ENCODE measurements at regions of chr19 and their contacts with region 1.

Region 1: GRCh38 chr19:47243776-47244547 is 12.4 kb upstream of the CCDC9 start:
- DNase-seq: peak; percentile 99
- ATAC-seq: peak; percentile 85
- H3K4me3 Mint-ChIP-seq: peak overlapping the region; percentile 87
- H3K27ac Mint-ChIP-seq: peak overlapping the region; percentile 96
- H3K4me1 Mint-ChIP-seq: peaks cover 28% of the 10 kb centered on the region
- H3K27me3 Mint-ChIP-seq: no peaks in the 10 kb centered on the region

Region 2: GRCh38 chr19:47130591-47131227 is 113.3 kb before region 1 on chr19 and contains the start of gene SAE1:
- POLR2A ChIA-PET with region 1: interaction called, 31 read pairs
- DNase-seq: peak; percentile 96
- ATAC-seq: peak; percentile 92
- H3K4me3 Mint-ChIP-seq: peak within 1 kb of the TSS; percentile 94
- H3K27ac Mint-ChIP-seq: peak within 1 kb of the TSS; percentile 93
- H3K4me1 Mint-ChIP-seq: peaks cover 38% of the 10 kb centered on the region
- H3K27me3 Mint-ChIP-seq: no peaks in the 10 kb centered on the region
- total RNA-seq, gene SAE1: 108 to 114 TPM

Region 3: DNA sequence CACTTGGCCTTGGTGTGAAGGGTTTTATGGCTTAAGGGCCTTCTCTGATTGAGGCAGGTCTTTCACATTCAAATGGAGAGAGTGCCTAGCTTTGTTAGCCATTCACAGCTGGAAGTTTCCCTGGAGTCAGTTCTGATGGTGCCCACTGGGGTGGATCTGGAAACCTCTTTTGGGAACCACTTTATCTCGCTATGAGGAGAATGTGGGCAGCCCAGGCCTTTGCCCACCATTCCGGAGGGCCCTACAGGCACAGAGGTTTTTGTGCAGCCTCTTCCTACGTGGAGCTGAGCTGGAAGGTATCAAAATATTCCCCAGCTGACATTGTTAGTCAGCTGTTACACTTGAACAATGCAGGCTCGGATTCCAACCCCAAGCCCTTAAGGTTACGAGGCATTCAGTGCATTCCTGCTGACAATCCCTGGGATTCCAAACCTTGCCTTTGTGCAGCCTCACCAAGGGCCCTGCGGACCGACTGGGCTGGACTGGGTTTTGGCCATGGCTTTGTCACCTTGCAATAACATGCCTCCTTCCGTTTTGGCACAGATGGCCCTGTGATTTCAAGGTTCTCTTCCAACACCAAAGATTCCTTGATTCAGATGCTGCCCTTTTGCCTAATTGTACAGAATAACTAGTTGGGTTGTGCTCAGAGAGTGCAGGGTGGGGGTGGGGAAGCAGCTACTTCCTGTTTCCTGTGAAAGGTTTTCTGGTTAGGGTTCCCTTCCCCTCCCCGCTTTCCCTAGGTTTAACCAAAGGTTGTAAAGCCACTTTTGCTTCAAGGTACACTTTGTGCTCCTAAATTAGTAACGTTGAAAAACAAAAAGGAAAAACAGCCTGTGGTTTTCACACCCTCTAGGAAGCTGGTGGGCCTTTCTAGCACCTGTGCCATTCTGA is 86.3 kb before region 1 on chr19:
- POLR2A ChIA-PET with region 1: interaction called, 23 read pairs
- DNase-seq: no peak
- ATAC-seq: peak; percentile 19
- H3K4me3 Mint-ChIP-seq: peak overlapping the region; percentile 73
- H3K27ac Mint-ChIP-seq: peak overlapping the region; percentile 86
- H3K4me1 Mint-ChIP-seq: peaks cover 39% of the 10 kb centered on the region
- H3K27me3 Mint-ChIP-seq: no peaks in the 10 kb centered on the region

Region 4: DNA sequence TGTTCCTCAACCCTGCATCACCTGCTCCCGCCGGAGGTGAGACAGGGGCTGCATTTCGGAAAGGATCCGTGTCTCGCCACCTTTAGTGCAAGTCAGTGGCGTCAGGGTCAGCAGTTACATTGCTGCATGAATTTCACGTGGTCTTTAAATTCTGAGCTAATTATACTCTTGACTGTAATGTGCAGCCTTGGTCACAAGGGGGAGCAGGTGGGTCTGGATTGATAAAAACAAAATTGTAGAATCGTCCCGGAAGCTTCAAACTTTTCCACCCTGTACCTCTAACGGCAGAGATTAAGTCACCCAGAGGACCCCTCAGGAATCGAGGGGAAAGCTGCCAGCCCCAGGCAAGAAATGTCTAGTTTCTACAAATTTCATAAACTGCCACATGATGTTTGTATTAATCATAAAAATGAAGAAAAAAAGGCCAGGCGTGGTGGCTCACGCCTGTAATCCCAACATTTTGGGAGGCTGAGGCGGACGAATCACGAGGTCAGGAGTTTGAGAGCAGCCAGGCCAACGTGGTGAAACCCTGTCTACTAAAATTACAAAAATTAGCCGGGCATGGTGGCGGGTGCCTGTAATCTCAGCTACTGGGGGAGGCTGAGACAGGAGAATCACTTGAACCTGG is 33.2 kb before region 1 on chr19:
- POLR2A ChIA-PET with region 1: interaction called, 84 read pairs
- DNase-seq: peak; percentile 66
- ATAC-seq: peak; percentile 77
- H3K4me3 Mint-ChIP-seq: peak overlapping the region; percentile 21
- H3K27ac Mint-ChIP-seq: peak overlapping the region; percentile 96
- H3K4me1 Mint-ChIP-seq: peaks cover 10% of the 10 kb centered on the region
- H3K27me3 Mint-ChIP-seq: no peaks in the 10 kb centered on the region

Region 5: DNA sequence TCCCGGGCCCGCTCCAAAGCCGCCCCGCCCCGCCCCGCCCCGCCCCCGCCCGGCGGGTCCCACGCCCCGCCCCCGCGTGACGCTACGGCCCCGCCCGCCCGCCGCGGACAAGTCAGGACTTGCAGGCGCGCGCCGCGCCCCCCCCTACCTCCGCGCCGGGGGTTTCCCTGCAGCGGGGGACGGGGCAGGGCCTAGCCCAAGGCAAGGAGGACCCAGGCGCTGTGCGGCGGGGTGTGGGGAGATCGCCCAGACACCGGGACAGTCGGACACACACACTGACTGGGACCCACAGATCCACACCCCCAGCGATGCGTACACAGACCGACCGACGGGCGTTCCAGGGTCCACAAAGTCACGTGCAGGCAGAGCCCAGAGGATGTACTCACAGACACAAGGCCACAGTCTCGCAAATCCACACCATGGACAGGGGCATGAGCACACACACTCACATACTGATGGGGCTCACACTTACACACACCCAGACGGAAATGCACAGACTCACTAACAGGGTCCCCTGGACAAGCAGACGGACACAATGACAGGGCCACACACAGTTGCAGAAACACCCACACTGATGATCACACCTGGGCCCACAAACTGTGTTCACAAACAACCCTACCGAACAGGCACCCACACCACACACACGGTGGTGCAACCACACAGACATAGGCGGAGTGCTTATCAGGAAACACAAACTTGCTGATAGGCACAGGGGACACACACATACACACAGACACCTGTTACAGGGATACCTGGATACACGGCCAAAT is 12.6 kb before region 1 on chr19:
- POLR2A ChIA-PET with region 1: interaction called, 99 read pairs
- DNase-seq: peak; percentile 94
- ATAC-seq: peak; percentile 53
- H3K4me3 Mint-ChIP-seq: peak overlapping the region; percentile 78
- H3K27ac Mint-ChIP-seq: peak overlapping the region; percentile 85
- H3K4me1 Mint-ChIP-seq: peaks cover 17% of the 10 kb centered on the region
- H3K27me3 Mint-ChIP-seq: peaks cover 8% of the 10 kb centered on the region

Region 6: DNA sequence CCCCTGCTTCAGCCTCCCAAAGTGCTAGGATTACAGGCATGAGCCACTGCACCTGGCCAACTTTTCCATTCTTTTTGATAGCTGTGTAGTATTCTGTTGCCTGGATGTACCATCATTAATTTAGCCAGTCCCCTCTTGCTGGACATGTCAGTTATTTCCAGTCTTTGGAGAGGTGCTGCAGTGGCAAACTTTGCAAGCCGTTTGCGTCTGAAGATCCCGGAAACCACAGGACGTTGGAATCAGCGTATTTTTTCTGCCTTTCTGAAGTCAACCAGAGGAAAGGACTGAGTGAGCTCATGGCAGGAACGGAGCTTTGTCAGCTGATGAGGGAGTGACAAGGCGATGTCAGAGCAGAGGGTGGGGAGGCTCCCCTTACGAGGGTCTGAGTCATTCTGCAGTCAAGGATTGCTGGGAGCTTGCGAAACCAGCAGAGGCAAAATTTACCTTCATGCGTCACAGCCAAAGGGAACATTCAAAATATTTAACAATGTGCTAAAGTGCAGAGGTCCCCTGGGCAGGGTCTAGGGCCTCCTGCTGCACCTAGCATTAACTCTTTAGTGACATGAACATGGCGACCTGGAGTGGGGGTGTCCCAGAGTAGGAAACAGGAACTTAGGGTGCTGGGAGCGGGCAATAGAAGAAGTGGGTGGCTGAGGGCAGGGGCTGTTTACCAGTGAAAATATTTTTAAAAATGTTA is 71.3 kb after region 1 on chr19:
- POLR2A ChIA-PET with region 1: no interaction called
- DNase-seq: no peak
- ATAC-seq: no peak
- H3K4me3 Mint-ChIP-seq: no peak overlapping the region
- H3K27ac Mint-ChIP-seq: no peak overlapping the region
- H3K4me1 Mint-ChIP-seq: no peaks in the 10 kb centered on the region
- H3K27me3 Mint-ChIP-seq: peaks cover 3% of the 10 kb centered on the region